Caco-2 (cell line): ENCODE measurements at regions of chr3 and their contacts with region 1.

Region 1: GRCh38 chr3:53938645-53939044 is 47.0 kb upstream of the SELENOK start:
- DNase-seq: peak; percentile 40 to 65
- H3K4me3 ChIP-seq: no peak overlapping the region
- H3K4me3 Mint-ChIP-seq: no peak overlapping the region
- H3K27ac Mint-ChIP-seq: no peak overlapping the region
- H3K4me1 ChIP-seq: no peaks in the 10 kb centered on the region
- H3K4me1 Mint-ChIP-seq: no peaks in the 10 kb centered on the region
- H3K27me3 ChIP-seq: no peaks in the 10 kb centered on the region
- H3K27me3 Mint-ChIP-seq: no peaks in the 10 kb centered on the region
- CTCF ChIP-seq: peak; percentile 70 to 75

Region 2: GRCh38 chr3:52593103-52593502 is 1345.5 kb before region 1 on chr3:
- CTCF ChIA-PET with region 1: interaction called, 10 read pairs
- POLR2A ChIA-PET with region 1: no interaction called
- intact Hi-C with region 1: no loop called
- DNase-seq: no peak
- H3K4me3 ChIP-seq: no peak overlapping the region
- H3K4me3 Mint-ChIP-seq: no peak overlapping the region
- H3K27ac Mint-ChIP-seq: no peak overlapping the region
- H3K4me1 ChIP-seq: no peaks in the 10 kb centered on the region
- H3K4me1 Mint-ChIP-seq: no peaks in the 10 kb centered on the region
- H3K27me3 ChIP-seq: no peaks in the 10 kb centered on the region
- H3K27me3 Mint-ChIP-seq: no peaks in the 10 kb centered on the region
- CTCF ChIP-seq: no peak

Region 3: DNA sequence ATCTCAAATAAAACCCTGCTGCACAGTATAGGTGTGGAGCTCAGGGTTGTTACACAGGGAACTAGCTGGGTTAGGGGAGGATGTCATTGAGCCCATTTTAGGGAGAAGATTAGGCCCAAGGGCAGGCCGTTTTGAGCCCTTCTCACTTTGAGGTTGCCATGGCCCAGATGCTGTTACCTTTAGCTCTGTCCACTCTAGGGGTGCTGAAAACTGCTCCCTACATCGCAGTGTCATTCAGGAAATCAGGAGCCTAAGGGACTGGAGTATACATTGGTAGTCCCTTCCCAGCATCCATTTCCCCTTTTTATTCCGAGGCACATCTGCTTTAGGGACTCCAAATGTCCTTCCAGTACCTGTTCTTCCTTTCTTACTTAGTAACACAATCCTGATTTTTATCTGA is 32.0 kb after region 1 on chr3:
- CTCF ChIA-PET with region 1: no interaction called
- POLR2A ChIA-PET with region 1: no interaction called
- intact Hi-C with region 1: no loop called
- DNase-seq: peak in 1 of 2 experiments; percentile 15
- H3K4me3 ChIP-seq: no peak overlapping the region
- H3K4me3 Mint-ChIP-seq: no peak overlapping the region
- H3K27ac Mint-ChIP-seq: no peak overlapping the region
- H3K4me1 ChIP-seq: no peaks in the 10 kb centered on the region
- H3K4me1 Mint-ChIP-seq: no peaks in the 10 kb centered on the region
- H3K27me3 ChIP-seq: no peaks in the 10 kb centered on the region
- H3K27me3 Mint-ChIP-seq: no peaks in the 10 kb centered on the region
- CTCF ChIP-seq: no peak

Region 4: GRCh38 chr3:54146506-54147239 is 208.0 kb after region 1 on chr3:
- CTCF ChIA-PET with region 1: interaction called, 7 read pairs
- POLR2A ChIA-PET with region 1: no interaction called
- intact Hi-C with region 1: loop called (anchors 1 kb)
- DNase-seq: peak; percentile 61 to 69
- H3K4me3 ChIP-seq: no peak overlapping the region
- H3K4me3 Mint-ChIP-seq: no peak overlapping the region
- H3K27ac Mint-ChIP-seq: no peak overlapping the region
- H3K4me1 ChIP-seq: no peaks in the 10 kb centered on the region
- H3K4me1 Mint-ChIP-seq: no peaks in the 10 kb centered on the region
- H3K27me3 ChIP-seq: no peaks in the 10 kb centered on the region
- H3K27me3 Mint-ChIP-seq: peaks cover 23% of the 10 kb centered on the region
- CTCF ChIP-seq: peak; percentile 74 to 86

Region 5: DNA sequence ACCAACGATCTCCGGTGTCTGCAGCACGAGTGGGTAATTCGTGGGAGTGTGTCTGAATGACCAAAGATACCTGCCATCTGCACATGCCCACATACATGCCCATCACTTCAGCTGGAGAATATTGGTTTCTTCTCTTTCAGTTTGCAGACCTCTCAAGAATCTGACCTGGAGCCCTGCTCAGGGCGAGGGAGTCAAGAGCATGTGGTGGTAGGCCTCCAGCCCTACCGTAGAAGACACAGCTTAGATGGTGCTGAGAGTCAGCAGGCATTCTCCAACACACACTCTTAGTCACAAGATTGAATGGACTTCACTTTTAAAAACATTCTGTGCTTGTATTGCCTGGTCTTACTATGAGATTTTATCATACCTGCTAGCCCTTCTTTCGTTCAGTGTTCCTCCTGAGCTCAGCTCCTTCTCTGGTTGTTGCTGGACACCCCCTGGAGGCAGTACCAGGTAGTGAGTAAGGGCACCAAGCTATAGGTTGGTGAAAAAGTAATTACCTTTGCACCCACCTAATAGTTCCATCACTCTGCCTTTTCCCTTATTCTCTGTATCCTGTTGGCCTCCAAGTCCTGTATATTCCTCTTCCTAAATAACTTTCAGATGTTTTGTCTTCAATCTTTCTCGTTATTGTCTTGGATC is 435.7 kb after region 1 on chr3:
- CTCF ChIA-PET with region 1: interaction called, 16 read pairs
- POLR2A ChIA-PET with region 1: no interaction called
- intact Hi-C with region 1: loop called (anchors 2 kb)
- DNase-seq: peak in 1 of 2 experiments; percentile 47
- H3K4me3 ChIP-seq: no peak overlapping the region
- H3K4me3 Mint-ChIP-seq: no peak overlapping the region
- H3K27ac Mint-ChIP-seq: no peak overlapping the region
- H3K4me1 ChIP-seq: no peaks in the 10 kb centered on the region
- H3K4me1 Mint-ChIP-seq: peaks cover 7% of the 10 kb centered on the region
- H3K27me3 ChIP-seq: 0 out of 2 replicates have a peak, but pooled peaks cover 1% of the 10 kb centered on the region
- H3K27me3 Mint-ChIP-seq: peaks cover 3% of the 10 kb centered on the region
- CTCF ChIP-seq: peak; percentile 38 to 69

Region 6: DNA sequence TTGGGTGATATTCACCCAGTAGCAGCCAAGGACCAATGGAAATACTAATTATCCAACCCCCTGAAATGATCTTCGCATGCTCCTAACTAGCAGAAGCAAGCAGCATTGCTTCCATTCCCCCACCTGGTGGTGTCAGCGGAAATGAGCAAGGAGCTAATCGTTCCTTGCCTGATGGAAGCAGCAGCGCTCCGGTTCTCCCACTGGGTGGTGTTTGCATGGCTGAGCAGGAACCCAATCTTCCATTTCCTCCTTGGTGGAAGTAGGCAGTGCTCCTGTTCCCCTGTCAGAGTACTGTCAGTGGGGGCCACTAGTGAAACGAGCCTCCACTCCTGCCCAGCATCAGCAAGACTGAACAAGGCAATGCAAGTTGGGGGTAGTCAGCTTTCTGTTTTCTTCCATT is 495.2 kb after region 1 on chr3:
- CTCF ChIA-PET with region 1: interaction called, 5 read pairs
- POLR2A ChIA-PET with region 1: no interaction called
- intact Hi-C with region 1: loop called (anchors 5 kb)
- DNase-seq: peak; percentile 59 to 62
- H3K4me3 ChIP-seq: no peak overlapping the region
- H3K4me3 Mint-ChIP-seq: no peak overlapping the region
- H3K27ac Mint-ChIP-seq: no peak overlapping the region
- H3K4me1 ChIP-seq: no peaks in the 10 kb centered on the region
- H3K4me1 Mint-ChIP-seq: no peaks in the 10 kb centered on the region
- H3K27me3 ChIP-seq: no peaks in the 10 kb centered on the region
- H3K27me3 Mint-ChIP-seq: no peaks in the 10 kb centered on the region
- CTCF ChIP-seq: peak; percentile 34 to 52